ENCODE measurements at regions of chr5 and their contacts with region 1.

Region 1: DNA sequence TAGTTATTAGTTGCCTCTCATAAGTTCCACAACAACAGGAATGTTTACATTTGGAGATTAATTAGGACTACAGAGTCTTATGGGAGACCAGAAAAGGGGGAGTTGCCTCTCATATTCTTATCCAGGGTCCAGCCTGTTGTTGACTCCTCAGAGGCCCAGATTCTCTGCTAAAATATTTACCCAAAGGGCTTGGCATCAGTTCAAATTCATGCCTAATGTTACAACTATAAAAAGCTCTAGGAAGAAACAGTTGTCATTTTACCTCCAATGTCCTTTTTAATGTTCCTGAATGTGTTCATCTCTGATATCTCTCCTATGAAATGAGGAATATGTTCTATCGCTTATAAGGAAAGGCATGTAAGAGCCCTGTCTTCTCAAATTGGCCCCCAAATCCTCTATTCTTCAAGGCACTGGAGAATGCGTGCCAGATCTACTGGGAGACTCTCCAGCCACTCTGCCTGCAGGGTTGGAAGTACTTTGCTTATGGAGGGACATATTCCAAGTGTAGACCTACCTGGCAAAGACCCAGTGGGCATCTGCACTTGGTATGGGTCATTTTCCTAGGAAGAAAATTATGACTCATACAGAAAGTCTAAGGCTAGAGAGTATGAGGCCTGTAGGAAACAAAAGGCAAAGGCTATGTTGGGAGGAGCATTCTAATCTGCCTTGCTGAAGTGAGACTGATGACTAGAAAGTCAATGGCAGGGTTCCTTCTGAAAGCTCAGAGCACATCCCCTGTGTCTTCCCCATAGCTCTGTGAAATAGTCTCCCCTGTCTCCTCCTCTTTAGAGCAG is 192.6 kb downstream of the ESM1 start:
- DNase-seq: no peak
- H3K4me3 Mint-ChIP-seq: no peak overlapping the region
- H3K27ac Mint-ChIP-seq: peak overlapping the region; percentile 88
- H3K4me1 Mint-ChIP-seq: peaks cover 35% of the 10 kb centered on the region
- H3K27me3 Mint-ChIP-seq: peaks cover 25% of the 10 kb centered on the region

Region 2: GRCh38 chr5:54646356-54647101 is 146.3 kb before region 1 on chr5:
- intact Hi-C with region 1: loop called (anchors 1 kb)
- DNase-seq: peak; percentile 74
- H3K4me3 Mint-ChIP-seq: peak overlapping the region; percentile 46
- H3K27ac Mint-ChIP-seq: peak overlapping the region; percentile 86
- H3K4me1 Mint-ChIP-seq: peaks cover 50% of the 10 kb centered on the region
- H3K27me3 Mint-ChIP-seq: no peaks in the 10 kb centered on the region

Region 3: DNA sequence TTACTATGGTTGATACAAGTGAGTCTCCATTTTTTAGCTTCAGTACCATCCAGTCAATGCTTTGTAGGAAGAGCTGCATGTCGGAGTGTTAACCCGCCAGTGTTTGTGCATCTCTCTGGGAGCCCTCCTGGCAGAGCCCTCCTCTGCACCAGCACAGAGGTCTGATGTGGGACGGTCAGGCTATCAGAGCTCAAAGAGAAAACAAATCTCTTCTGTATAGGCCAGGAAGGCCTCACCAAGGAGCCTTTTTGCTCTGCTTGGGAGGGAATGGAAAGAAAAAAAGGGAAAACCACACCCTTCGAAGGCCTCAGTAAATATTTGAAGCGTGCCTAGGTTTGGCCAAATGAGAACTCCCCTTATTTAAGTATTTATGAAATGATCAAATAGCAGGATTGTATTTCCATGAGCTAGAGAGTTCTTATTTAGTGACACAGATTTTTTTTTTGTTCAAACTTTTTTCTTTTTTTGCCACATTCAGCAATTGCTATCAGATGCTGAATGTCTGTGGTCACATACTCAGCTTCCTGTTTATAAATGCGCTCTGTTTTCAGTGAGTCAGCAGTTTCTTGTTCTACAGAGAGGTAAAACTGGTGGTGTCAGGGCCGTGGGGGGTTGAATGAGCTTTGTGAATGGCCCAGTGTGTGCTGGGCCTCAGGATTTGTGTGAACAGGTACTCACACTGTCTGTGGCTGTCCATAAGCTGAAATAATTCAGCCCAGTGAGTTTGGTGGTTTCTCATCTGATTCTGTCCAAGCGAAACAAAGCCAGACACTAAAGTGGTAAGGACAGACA is 48.6 kb before region 1 on chr5:
- intact Hi-C with region 1: loop called (anchors 2 kb)
- DNase-seq: peak; percentile 58
- H3K4me3 Mint-ChIP-seq: no peak overlapping the region
- H3K27ac Mint-ChIP-seq: peak overlapping the region; percentile 59
- H3K4me1 Mint-ChIP-seq: peaks cover 26% of the 10 kb centered on the region
- H3K27me3 Mint-ChIP-seq: peaks cover 3% of the 10 kb centered on the region

Region 4: GRCh38 chr5:54838843-54839242 is 46.0 kb after region 1 on chr5:
- intact Hi-C with region 1: loop called (anchors 1 kb)
- DNase-seq: no peak
- H3K4me3 Mint-ChIP-seq: no peak overlapping the region
- H3K27ac Mint-ChIP-seq: no peak overlapping the region
- H3K4me1 Mint-ChIP-seq: peaks cover 22% of the 10 kb centered on the region
- H3K27me3 Mint-ChIP-seq: peaks cover 28% of the 10 kb centered on the region